ENCODE measurements at regions of chr12 and their contacts with region 1.

Region 1: GRCh38 chr12:84924981-84925380 is 12.4 kb upstream of the SLC6A15 start:
- DNase-seq: no peak
- ATAC-seq: no peak
- H3K4me3 ChIP-seq: no peak overlapping the region
- H3K27ac ChIP-seq: no peak overlapping the region
- H3K4me1 ChIP-seq: no peaks in the 10 kb centered on the region
- H3K27me3 ChIP-seq: no peaks in the 10 kb centered on the region
- CTCF ChIP-seq: no peak
- EP300 ChIP-seq: no peak
- POLR2A ChIP-seq: no peak
- RAD21 ChIP-seq: no peak

Region 2: GRCh38 chr12:83128540-83128939 is 1796.4 kb before region 1 on chr12:
- CTCF ChIA-PET with region 1: no interaction called
- POLR2A ChIA-PET with region 1: no interaction called
- in situ Hi-C with region 1: no loop called
- intact Hi-C with region 1: loop called (anchors 5 kb)
- DNase-seq: no peak
- ATAC-seq: no peak
- H3K4me3 ChIP-seq: no peak overlapping the region
- H3K27ac ChIP-seq: no peak overlapping the region
- H3K4me1 ChIP-seq: no peaks in the 10 kb centered on the region
- H3K27me3 ChIP-seq: no peaks in the 10 kb centered on the region
- CTCF ChIP-seq: no peak
- EP300 ChIP-seq: no peak
- POLR2A ChIP-seq: no peak
- RAD21 ChIP-seq: no peak

Region 3: GRCh38 chr12:84636801-84637285 is 288.1 kb before region 1 on chr12:
- CTCF ChIA-PET with region 1: no interaction called
- POLR2A ChIA-PET with region 1: no interaction called
- in situ Hi-C with region 1: no loop called
- intact Hi-C with region 1: no loop called
- DNase-seq: no peak
- ATAC-seq: no peak
- H3K4me3 ChIP-seq: no peak overlapping the region
- H3K27ac ChIP-seq: no peak overlapping the region
- H3K4me1 ChIP-seq: no peaks in the 10 kb centered on the region
- H3K27me3 ChIP-seq: no peaks in the 10 kb centered on the region
- CTCF ChIP-seq: no peak
- EP300 ChIP-seq: no peak
- POLR2A ChIP-seq: no peak
- RAD21 ChIP-seq: no peak